ENCODE measurements at regions of chr20 and their contacts with region 1.

Region 1: DNA sequence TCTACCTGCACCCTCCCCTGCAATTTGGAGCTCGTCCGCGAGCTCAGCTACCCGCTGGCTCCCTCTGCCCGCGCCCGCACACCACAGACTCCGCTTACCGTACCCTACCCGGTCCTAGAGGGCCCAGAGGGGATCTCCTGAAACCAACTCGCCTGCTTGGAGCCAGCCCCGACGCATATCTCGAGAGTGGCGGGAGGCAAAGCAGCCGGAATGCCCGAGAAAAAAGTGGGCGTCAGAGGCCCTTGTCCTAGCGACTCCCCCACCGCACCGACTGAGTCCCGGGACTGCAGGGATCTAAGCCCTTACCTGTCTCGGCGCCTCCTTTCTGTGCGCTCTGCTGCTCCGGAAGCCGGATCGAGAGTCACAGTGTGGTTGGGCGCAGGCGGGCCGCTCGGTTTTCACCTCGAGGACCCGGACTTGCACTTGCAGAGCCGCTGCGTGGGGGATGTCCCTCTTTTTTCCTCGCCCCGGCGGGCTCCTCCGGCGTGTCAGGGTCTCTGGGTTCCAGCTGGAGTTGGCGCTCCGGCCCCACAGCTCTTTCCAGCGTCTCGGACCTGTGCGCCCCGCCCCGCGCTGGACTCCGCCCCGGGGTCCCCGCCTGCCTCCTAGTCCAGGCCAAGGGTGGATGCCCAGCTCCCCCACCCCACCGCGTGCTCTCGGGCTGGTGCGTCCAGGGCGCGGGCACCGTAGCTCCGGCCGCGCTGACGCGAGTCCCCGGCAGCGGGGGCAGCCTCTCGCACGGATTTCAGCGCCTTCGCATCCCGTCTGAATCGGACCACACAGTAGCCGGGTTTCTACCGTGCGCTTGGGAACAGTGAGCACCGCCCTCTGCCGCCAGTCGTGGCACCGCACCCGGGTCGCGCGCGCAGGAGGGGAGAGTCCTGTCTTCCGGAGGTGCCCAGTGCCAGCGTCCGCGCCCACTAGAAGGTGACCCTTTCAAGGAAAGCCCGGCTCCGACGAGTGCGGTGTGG is at the start of gene PROKR2:
- DNase-seq: peak; percentile 88
- H3K4me3 ChIP-seq: peak within 1 kb of the TSS in 1 of 2 experiments; percentile 46; a peak in 2 of 4 replicates
- H3K27ac ChIP-seq: peak within 1 kb of the TSS in 1 of 2 experiments; percentile 71; a peak in 1 of 4 replicates
- H3K4me1 ChIP-seq: peaks cover 0 to 40% of the 10 kb centered on the region in 2 experiments; a peak in 1 of 4 replicates
- H3K27me3 ChIP-seq: peaks cover 14% of the 10 kb centered on the region
- CTCF ChIP-seq: no peak
- EP300 ChIP-seq: no peak
- RAD21 ChIP-seq: peak; percentile 58
- polyA plus RNA-seq, gene PROKR2: 0.13 and 0.44 TPM in 2 replicates

Region 2: GRCh38 chr20:5297280-5298004 is 19.0 kb before region 1 on chr20:
- CTCF ChIA-PET with region 1: interaction called, 11 read pairs
- POLR2A ChIA-PET with region 1: no interaction called
- DNase-seq: peak; percentile 58
- H3K4me3 ChIP-seq: no peak overlapping the region
- H3K27ac ChIP-seq: peak overlapping the region in 1 of 2 experiments; percentile 51; a peak in 1 of 4 replicates
- H3K4me1 ChIP-seq: peaks cover 0 to 14% of the 10 kb centered on the region in 2 experiments; a peak in 1 of 4 replicates
- H3K27me3 ChIP-seq: no peaks in the 10 kb centered on the region; the same call in 1 of the 2 replicates
- CTCF ChIP-seq: no peak
- EP300 ChIP-seq: peak in 1 of 2 experiments; percentile 68; a peak in 1 of 4 replicates
- RAD21 ChIP-seq: peak; percentile 12; the same call in 1 of the 2 replicates

Region 3: DNA sequence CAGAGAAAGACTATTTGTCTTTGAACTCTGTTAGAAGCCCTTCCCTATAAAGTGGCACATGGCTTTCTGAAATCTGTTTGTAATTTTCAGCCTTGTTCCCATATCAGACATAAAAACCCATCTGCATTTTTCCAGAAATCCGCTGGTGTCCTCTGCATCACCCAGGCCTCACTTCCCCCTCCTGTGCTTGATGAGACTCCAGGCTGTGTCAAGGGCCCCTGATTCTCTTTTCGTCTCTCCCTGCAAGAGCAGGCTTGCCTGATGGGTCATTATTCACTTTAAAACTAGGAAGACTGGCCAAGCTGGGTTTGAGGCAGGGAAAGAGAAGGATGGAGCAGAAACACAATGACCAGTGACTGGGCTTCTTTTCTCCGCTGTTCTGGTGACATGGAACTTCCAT is 10.9 kb after region 1 on chr20:
- CTCF ChIA-PET with region 1: interaction called, 15 read pairs
- POLR2A ChIA-PET with region 1: no interaction called
- DNase-seq: peak; percentile 29
- H3K4me3 ChIP-seq: no peak overlapping the region
- H3K27ac ChIP-seq: peak overlapping the region in 1 of 2 experiments; percentile 61; a peak in 1 of 4 replicates
- H3K4me1 ChIP-seq: peaks cover 0 to 16% of the 10 kb centered on the region in 2 experiments; a peak in 1 of 4 replicates
- H3K27me3 ChIP-seq: peaks cover 6% of the 10 kb centered on the region
- CTCF ChIP-seq: no peak
- EP300 ChIP-seq: peak in 1 of 2 experiments; percentile 6; a peak in 1 of 4 replicates
- RAD21 ChIP-seq: no peak

Region 4: DNA sequence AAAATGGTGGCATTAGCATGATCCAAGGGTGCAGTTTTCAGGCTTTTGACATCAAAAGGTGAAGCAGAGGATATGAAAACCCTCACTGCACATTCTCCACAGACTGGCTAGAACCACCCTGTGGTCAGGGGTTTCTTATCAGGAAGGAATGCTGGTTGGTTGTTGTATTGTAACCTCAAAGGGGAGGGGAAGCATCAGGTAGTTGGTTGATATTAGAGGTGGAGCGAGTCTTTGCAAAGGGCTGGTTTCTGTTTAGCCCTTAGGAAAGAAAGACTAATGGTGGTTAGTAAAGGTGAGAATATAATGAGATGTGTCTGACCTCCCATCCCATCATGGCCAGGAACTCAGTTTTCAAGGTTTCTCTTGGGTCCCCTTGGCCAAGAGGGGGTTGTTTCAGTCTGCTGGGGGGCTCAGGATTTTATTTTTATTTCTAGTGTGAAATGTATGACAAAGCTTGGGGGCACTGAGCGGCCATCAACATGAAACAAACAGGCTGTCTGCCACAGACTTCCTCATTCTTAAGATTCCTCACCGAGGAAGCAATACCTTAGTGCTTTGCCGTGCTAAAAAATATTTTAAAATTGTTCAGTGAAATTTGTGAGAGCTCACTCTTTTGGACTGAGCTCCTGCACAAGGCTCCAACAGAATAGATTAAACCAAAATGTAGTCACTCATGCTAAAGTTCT is 47.8 kb after region 1 on chr20:
- CTCF ChIA-PET with region 1: no interaction called
- POLR2A ChIA-PET with region 1: no interaction called
- DNase-seq: no peak
- H3K4me3 ChIP-seq: no peak overlapping the region
- H3K27ac ChIP-seq: no peak overlapping the region
- H3K4me1 ChIP-seq: no peaks in the 10 kb centered on the region
- H3K27me3 ChIP-seq: no peaks in the 10 kb centered on the region
- CTCF ChIP-seq: no peak
- EP300 ChIP-seq: no peak
- RAD21 ChIP-seq: no peak

Measured in SK-N-SH (cell line).